ENCODE measurements at regions of chr20 and their contacts with region 1.

Region 1: DNA sequence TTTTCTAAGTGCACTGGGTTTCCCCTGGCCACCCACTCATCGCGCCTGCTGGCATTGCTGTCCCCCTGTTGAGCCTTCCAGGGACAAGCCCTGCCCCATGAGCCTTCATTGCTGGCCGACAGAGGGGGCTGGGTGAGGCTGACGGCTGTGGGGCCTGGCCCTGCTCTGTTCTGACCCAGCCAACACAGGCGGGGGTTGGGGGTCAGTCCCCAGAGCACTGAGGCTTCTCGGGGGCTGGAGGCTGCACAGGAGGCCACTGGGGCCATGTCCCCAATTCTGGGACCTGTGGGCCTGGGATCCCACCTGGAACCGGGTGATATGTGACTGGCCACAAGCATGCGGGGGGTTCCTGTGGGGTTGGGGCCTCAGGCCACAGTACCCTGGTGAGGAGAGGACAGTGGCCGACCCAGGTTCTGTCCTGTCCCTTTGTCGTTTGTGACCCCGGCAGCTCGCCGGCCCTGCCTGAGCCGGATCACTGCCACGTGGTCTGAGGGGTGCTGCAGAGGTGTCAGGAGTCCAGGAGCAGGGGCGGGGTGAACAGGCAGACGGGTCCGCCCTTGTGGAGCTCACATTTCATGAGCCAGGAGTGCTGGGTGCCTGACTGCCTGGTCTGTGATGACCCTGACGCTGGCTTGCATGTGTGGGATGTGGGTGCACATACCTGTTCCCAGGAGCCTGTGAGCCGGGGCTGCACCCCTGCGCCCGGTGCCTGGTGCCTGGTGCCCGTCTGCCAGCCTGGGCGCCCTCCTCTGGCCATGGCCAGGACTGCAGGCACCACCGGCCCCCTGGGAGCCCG is 2.1 kb upstream of the COL20A1 start:
- DNase-seq: no peak

Region 2: GRCh38 chr20:63381807-63382322 is 91.0 kb after region 1 on chr20:
- in situ Hi-C with region 1: loop called (anchors 25 kb)
- DNase-seq: no peak

Region 3: DNA sequence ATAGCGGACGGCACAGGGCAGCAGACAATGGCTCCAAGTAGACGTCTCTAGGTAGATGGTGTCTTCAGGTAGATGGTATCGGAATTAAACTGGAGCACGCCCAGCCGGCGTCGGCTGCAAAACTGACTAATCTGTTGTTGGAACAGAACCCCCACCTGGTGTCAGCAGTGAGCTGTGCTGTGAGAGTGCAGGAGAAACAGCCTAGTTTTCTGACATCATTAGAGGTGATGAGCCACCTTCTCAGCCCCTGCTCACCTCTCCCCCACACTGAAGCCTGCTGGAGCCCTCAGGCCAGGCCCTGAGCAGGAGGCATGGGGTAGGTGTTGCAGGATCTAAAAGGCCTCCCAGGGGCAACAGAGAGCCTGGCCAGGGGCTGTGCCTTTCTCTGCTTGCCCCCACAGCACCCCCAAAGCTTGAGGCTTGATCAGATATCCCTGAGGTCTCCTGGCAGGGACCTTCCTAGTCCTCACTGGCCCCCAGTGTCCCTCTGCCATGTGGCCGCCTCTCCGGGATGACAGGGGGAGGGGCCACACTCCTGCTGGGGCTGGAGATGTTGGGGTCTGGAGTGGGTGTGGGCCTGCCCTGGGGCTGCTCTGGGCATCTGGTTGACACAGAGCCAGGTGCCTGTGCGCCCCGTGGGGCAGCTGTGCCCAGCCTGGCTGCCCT is 290.1 kb after region 1 on chr20:
- in situ Hi-C with region 1: loop called (anchors 25 kb)
- DNase-seq: peak; percentile 46

Region 4: DNA sequence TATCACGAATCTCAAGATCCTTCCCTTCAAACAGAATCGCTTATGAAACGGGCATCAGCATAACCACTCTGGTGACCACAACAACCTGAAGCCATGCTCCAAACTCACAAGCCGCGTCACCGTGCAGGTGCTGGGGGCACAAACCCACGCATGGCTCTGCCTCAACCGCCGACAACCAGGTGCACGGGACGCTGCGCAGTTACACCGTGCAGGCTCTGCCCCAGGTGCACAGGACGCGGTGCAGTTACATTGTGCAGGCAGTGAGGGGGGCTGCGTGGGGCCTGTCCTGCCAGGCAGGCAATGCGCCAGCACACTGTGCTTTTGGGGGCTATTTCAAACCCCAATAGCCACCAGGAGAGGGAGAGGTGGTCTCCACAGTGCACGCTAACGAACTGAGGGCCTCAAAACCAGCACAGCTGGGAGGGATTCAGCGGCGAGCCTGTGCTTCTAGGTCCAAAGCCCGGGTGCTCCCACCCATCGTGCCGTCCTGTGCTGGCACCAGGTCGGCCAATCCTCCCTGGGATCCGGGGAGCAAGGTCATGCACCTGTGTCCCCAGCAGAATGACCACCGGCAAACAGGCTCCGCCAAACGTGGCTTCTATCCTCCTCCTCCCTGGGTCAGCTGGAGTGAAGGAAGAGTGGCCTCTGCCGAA is 504.4 kb after region 1 on chr20:
- in situ Hi-C with region 1: no loop called
- DNase-seq: no peak